ENCODE measurements at regions of chr12 and their contacts with region 1.

Region 1: DNA sequence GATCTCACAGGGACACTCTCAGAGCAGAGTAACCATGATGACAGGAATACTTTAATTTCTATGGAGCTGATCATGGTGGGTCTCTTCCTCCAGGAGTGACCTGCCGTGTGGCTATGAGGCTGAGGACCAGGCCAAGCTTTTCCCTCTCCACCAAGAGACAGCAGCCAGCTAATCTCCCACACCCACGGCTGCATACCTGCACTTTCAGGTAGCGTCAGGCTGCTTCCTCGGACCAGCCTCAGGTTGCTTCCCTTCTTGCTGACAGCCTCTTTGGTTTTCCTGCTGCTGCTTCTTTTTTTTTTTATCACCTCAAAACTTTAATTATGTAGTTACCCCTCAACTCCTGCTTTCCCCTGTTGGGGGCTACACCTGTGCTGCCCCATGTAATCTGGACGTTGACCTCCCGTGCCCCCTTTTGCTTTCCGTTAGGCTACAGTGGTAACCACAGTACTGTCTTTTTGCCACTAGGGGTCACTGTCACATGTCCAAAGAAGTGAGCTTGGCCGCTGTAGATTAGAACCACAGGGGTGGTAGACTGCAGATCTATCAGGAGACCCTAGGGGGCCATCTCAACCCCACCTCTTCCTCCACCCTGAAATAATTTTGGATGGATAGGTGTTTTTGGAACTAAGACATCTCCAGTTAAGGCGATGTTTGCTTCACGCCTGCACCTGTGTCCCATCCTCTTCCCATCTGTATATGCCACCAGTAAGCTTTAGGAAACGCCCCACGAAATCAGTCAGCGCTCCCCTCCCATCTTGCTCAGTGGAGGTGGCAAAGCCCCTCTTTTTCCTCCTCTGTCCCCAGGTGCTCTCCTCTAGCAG is 7.8 kb upstream of the PIP4K2C start:
- DNase-seq: peak; percentile 49 to 54
- H3K4me3 ChIP-seq: no peak overlapping the region
- H3K27ac ChIP-seq: no peak overlapping the region
- H3K4me1 ChIP-seq: no peaks in the 10 kb centered on the region
- H3K27me3 ChIP-seq: no peaks in the 10 kb centered on the region
- CTCF ChIP-seq: peak; percentile 92 to 97 (median 97)
- POLR2A ChIP-seq: no peak

Region 2: GRCh38 chr12:57619434-57620244 is 36.4 kb after region 1 on chr12:
- intact Hi-C with region 1: loop called (anchors 5 kb)
- DNase-seq: no peak
- H3K4me3 ChIP-seq: no peak overlapping the region
- H3K27ac ChIP-seq: no peak overlapping the region
- H3K4me1 ChIP-seq: peaks cover 0 to 11% of the 10 kb centered on the region in 2 donors
- H3K27me3 ChIP-seq: peaks cover 0 to 25% of the 10 kb centered on the region in 2 donors
- CTCF ChIP-seq: no peak
- POLR2A ChIP-seq: no peak

Measured in breast epithelium (tissue), 4 donors.